ENCODE measurements at regions of chr13 and their contacts with region 1.

Region 1: DNA sequence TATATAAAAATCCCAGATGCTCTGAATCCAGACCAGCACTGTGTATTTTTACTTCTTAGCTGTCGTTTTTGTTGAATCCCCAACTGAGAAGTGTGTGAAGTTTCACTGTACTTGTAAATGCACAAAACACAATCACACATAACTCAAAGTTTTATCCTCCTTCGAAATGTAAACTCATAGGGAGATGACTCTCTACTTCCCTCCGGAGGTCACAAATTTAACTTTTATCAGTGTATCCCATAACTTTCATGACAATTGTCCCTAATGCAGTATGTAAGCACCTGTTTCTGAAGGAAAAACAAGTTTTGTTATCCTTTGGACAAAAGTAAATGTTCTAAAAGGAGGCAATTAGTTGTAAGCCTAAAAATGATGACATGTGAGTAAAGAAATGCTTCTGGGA is 665.0 kb upstream of the SLITRK6 start:
- DNase-seq: peak; percentile 18
- ATAC-seq: peak; percentile 43; the same call in 1 of the 2 replicates
- H3K4me3 ChIP-seq: no peak overlapping the region
- H3K27ac ChIP-seq: no peak overlapping the region
- H3K4me1 ChIP-seq: no peaks in the 10 kb centered on the region
- H3K27me3 ChIP-seq: no peaks in the 10 kb centered on the region
- CTCF ChIP-seq: no peak; the same call in 1 of the 2 replicates

Region 2: DNA sequence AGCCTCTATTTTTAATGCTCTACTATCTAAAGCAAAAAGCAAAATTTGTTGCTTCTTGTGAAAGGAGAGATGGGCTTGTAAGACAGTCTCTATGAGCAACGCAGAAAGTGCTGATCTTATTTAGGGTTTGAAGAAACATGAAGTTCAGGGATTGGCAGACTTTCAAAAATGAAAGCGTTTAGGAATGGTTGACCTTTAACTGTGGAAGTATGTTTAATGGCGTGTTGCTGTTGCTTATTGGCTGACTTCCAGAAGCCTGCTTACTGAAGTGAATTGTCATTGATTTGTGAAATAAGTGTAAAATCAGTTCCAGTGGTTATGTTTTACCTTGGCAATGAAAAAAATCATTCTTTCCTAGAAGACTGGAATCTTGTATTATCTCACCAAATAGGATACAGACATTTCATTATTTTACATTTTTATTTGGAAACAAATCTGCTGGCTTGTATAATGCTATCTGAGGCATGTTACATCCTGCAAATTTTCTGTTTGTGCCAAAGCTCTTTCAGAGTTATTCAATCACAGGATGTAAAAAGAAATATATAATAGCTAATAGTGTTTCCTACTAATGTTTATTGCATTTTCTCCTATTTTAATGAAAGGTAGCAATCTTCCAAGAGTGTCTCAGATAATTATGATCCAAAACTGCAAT is 443.7 kb before region 1 on chr13:
- CTCF ChIA-PET with region 1: no interaction called
- POLR2A ChIA-PET with region 1: no interaction called
- intact Hi-C with region 1: no loop called
- DNase-seq: peak; percentile 25
- ATAC-seq: no peak
- H3K4me3 ChIP-seq: no peak overlapping the region
- H3K27ac ChIP-seq: no peak overlapping the region
- H3K4me1 ChIP-seq: no peaks in the 10 kb centered on the region
- H3K27me3 ChIP-seq: no peaks in the 10 kb centered on the region
- CTCF ChIP-seq: no peak

Region 3: DNA sequence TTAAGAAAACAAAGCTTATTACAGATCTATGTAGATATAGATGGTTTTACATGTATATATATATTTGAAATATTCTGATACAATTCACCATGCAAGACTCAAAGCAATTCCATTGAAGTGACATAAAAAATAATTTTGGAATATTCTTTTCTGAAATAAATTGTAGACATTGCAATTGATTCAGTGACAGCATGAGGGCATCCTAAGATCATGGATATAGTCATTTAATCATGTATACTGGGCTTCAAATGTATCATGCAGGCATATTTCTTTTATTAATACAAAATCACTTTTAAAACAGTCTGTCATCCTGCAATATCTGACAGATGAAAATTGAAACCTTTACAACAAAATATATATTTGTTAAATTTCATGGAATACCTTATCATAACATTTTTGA is 378.3 kb before region 1 on chr13:
- CTCF ChIA-PET with region 1: no interaction called
- POLR2A ChIA-PET with region 1: no interaction called
- intact Hi-C with region 1: loop called (anchors 2 kb)
- DNase-seq: peak; percentile 13
- ATAC-seq: no peak
- H3K4me3 ChIP-seq: no peak overlapping the region
- H3K27ac ChIP-seq: no peak overlapping the region
- H3K4me1 ChIP-seq: peaks cover 7% of the 10 kb centered on the region; the same call in 1 of the 2 replicates
- H3K27me3 ChIP-seq: no peaks in the 10 kb centered on the region
- CTCF ChIP-seq: peak; percentile 48; the same call in 1 of the 2 replicates

Region 4: DNA sequence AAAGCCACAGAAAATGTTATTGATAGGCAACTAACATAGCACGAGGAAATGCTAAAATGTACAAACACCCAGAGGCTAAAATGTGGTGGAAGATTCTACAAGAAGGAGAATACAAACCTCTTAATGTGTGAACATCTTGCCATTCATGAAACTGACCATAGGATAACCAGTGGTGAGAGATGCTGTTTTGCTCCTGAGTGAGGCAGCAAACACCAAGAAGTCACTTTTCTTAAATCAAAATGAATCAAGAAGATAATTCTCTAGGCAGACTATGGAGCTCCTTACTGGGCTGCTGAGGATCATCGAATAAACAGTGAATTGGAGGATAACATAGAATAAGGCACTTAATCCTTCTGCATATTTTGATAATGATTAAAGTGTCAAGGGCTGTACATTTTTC is 289.6 kb before region 1 on chr13:
- CTCF ChIA-PET with region 1: no interaction called
- POLR2A ChIA-PET with region 1: no interaction called
- intact Hi-C with region 1: loop called (anchors 2 kb)
- DNase-seq: peak; percentile 7
- ATAC-seq: peak; percentile 31; the same call in 1 of the 2 replicates
- H3K4me3 ChIP-seq: no peak overlapping the region
- H3K27ac ChIP-seq: no peak overlapping the region
- H3K4me1 ChIP-seq: no peaks in the 10 kb centered on the region
- H3K27me3 ChIP-seq: no peaks in the 10 kb centered on the region
- CTCF ChIP-seq: no peak; the same call in 1 of the 2 replicates

Region 5: DNA sequence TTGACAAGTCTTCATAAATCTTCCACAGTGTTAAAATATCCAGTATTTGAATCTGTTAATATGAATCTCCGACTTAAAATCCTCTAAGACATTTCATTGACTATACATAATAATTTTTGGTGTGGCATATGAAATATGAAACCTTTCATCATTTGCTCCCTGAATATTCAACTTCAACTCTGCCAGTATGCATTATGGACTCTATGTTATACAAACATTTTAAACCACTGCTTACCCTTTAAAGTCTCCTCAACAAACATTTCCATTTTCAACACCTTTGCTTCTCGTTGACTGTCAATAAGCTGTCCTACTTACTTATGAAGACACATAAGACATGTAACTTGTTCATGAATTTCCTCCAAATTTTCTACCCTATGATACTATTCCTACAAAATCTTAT is 85.6 kb before region 1 on chr13:
- CTCF ChIA-PET with region 1: no interaction called
- POLR2A ChIA-PET with region 1: no interaction called
- intact Hi-C with region 1: no loop called
- DNase-seq: no peak
- ATAC-seq: no peak
- H3K4me3 ChIP-seq: no peak overlapping the region
- H3K27ac ChIP-seq: no peak overlapping the region
- H3K4me1 ChIP-seq: no peaks in the 10 kb centered on the region
- H3K27me3 ChIP-seq: no peaks in the 10 kb centered on the region
- CTCF ChIP-seq: no peak

Region 6: DNA sequence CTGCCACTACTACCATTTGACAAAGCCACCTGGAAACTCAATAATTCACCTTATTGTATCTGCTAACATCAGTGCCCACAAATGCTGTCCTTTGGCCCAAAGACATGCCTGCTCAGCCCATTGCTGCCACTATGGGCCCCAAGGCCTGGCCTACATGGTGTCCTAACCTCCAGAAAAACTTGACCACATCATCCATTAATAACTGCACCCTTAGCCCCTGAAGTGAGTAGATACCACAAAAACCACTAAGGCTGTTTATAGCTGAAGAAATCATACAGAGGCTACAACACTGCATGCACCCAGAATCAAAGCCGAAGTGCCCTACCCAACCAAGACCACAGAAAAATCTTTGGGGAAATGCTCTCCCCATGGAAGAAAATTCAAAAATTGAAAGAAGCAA is 267.8 kb after region 1 on chr13:
- CTCF ChIA-PET with region 1: no interaction called
- POLR2A ChIA-PET with region 1: no interaction called
- intact Hi-C with region 1: loop called (anchors 10 kb)
- DNase-seq: no peak
- ATAC-seq: no peak
- H3K4me3 ChIP-seq: no peak overlapping the region
- H3K27ac ChIP-seq: no peak overlapping the region
- H3K4me1 ChIP-seq: no peaks in the 10 kb centered on the region
- H3K27me3 ChIP-seq: no peaks in the 10 kb centered on the region
- CTCF ChIP-seq: no peak

Region 7: DNA sequence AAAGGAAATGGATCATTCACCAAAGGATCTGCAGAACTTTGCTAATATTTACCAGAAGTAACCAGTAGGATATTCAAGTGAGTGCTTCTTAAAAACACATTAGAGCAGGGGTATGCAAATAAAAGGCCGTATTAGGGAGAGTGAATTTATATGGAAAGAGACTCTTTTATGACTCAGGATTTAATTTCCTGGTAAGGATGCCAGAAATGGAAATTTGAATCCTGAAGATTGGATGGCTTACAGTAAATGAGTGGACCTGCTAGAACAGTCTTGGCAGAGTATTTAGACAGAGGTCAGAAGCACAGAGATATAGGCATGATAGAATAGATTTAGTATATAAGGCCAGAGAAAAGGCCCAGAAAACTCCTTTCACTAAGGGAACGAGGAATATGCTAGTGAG is 1408.6 kb after region 1 on chr13:
- CTCF ChIA-PET with region 1: no interaction called
- POLR2A ChIA-PET with region 1: no interaction called
- intact Hi-C with region 1: no loop called
- DNase-seq: peak; percentile 27
- ATAC-seq: peak; percentile 76
- H3K4me3 ChIP-seq: no peak overlapping the region
- H3K27ac ChIP-seq: no peak overlapping the region
- H3K4me1 ChIP-seq: no peaks in the 10 kb centered on the region
- H3K27me3 ChIP-seq: no peaks in the 10 kb centered on the region
- CTCF ChIP-seq: no peak